HEK293 (cell line): ENCODE measurements at regions of chr9 and their contacts with region 1.

Region 1: DNA sequence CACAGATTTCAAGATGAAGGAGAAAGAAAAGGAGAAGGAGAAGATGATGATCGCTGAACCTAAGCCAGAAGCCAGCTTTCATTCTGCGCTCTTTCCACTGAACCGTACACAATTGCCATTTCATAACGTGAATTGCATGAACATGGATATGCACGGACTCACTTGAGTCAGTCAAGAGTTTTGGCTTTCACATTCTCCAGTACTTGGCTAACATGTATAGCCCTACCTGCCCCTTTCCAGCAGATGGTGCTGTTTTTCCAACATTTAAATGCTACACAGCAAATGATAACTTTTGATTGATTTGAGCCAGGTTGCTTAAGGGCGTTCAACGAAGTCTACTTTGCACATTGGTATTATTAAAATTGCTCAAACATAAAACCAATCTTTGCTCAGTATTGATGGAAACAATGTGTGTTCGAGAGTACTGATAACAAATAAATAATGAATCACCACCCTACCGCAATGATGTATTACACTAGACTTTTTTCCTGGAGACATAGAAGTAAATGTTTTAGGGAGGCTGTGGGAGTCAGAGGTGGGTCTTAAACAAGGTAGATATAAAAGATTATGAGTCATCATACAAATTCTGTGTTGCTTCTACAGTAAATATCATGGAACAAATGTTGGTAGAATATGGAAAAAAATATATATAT is 196.4 kb downstream of the TRPM3 start:
- H3K4me3 ChIP-seq: no peak overlapping the region
- H3K27ac ChIP-seq: no peak overlapping the region
- H3K4me1 ChIP-seq: no peaks in the 10 kb centered on the region
- CTCF ChIP-seq: peak; percentile 58

Region 2: DNA sequence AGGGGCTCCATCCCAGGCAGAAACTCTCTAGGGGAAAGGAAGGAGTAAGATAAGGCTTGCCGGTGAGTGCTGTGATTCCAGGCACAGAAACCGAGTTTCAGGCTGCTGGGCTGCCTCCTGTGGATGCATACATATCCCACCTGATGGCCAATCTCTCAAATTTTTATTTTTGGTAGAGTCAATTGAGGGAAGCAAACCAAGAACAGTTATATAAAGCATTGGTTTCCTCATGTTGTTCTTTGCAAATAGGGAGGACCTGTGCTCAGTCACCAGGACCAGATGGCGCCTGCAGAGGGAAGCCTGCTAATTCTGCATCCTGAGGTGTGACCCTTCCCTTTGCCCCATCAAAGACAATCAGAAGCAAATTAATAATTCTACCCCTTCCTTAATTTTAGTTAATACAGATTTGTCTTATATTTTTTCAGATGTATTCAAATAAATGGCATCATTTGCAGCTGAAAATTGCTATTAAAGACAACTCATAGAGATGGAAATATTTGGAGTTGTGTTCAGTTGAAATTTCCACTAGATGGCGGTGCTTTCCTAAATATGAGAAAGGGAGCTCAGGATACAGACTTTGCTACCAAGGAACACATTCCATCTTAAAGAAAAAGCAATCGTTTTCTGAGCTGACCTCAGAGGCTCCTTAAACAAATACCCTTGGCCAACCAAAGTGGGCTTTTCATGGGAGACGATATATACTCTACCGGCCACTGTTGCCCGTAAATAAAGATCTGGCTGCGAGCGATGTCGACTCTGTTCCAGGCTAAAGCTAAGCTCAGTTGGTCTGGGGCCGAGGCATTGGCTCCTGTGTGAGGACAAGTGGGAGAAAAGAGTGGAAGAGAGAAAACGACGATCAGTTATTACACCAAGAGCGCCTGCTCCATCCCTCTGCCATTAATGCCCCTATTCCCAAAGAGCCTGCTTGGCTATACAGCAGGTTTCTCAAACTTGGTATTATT is 284.9 kb before region 1 on chr9:
- CTCF ChIA-PET with region 1: interaction called, 14 read pairs
- POLR2A ChIA-PET with region 1: no interaction called
- H3K4me3 ChIP-seq: no peak overlapping the region
- H3K27ac ChIP-seq: no peak overlapping the region
- H3K4me1 ChIP-seq: no peaks in the 10 kb centered on the region
- CTCF ChIP-seq: peak; percentile 37; the same call in 1 of the 2 replicates

Region 3: DNA sequence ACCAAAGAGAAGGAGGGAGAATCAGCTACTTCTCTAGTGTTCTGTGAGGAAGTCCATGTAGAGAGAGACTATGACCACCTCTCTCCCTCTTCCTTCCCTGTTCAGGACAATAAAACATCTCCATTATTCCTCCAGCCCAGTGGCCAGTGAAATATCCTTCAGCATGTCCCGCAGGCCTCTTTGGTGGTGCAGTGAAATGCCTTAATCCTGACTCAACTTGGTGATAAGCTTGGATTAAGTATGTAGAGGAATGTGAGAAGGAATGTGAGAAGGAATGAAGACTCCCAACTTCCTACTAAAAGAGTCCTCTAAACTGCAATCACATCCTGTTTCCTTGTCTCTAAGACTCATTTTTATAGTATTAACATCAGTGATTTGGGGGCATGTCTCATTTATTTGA is 29.1 kb after region 1 on chr9:
- CTCF ChIA-PET with region 1: interaction called, 12 read pairs
- POLR2A ChIA-PET with region 1: no interaction called
- H3K4me3 ChIP-seq: no peak overlapping the region
- H3K27ac ChIP-seq: no peak overlapping the region
- H3K4me1 ChIP-seq: 0 out of 2 replicates have a peak, but pooled peaks cover 5% of the 10 kb centered on the region
- CTCF ChIP-seq: no peak

Region 4: DNA sequence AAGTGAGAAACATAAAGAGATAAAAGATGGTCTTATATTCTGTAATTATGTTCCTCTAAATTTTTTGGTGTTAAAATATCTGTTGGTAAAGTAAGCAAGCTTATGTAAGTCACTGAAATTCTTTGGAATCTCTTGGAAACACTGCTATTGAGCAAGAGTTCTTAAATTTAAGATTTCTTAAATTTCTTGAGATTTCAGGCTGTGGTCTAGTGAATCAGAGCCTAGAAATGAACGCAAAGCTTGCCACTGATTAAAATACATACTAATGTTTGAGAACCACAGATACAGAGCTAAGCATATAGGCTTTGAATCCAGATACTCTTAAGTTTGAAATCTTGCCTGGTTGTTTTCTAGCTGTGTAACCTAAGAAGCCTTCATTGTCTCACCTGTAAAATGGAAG is 63.0 kb after region 1 on chr9:
- CTCF ChIA-PET with region 1: interaction called, 10 read pairs
- POLR2A ChIA-PET with region 1: no interaction called
- H3K4me3 ChIP-seq: no peak overlapping the region
- H3K27ac ChIP-seq: no peak overlapping the region
- H3K4me1 ChIP-seq: peaks cover 4% of the 10 kb centered on the region; the same call in 1 of the 2 replicates
- CTCF ChIP-seq: no peak

Region 5: GRCh38 chr9:70995511-70995910 is 70.5 kb after region 1 on chr9:
- CTCF ChIA-PET with region 1: interaction called, 45 read pairs
- POLR2A ChIA-PET with region 1: no interaction called
- H3K4me3 ChIP-seq: no peak overlapping the region
- H3K27ac ChIP-seq: no peak overlapping the region
- H3K4me1 ChIP-seq: no peaks in the 10 kb centered on the region
- CTCF ChIP-seq: no peak

Region 6: DNA sequence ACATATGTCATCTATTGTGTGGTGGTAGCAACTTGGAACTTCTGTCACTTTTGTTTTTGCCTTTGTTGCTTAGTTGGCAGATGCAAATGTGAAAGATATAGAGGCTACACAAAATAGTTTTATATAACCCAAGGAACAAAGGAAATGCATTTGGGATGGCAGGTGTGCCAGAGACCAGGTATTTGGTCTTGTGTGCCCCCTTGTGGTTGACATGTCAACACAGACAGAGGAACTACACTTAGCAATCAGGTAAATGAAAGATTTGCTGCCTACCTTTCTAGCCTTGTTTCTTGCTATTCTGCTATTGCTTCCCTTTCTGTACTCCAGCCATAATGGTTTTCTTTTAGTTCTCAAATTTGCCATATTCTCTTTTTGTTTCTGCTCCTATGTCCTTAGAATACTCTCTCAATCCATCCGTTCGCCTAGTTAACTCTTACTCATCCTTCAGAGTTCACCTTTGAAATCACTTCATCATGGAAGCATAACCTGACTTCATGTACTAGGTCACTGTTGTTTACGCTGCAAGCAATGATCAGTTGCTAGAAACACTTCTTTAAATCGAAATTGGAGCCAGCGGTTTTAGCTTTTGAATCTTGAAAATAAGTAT is 76.9 kb after region 1 on chr9:
- CTCF ChIA-PET with region 1: interaction called, 45 read pairs
- POLR2A ChIA-PET with region 1: no interaction called
- H3K4me3 ChIP-seq: no peak overlapping the region
- H3K27ac ChIP-seq: no peak overlapping the region
- H3K4me1 ChIP-seq: no peaks in the 10 kb centered on the region
- CTCF ChIP-seq: 0 out of 2 replicates have a peak, but pooled peaks have one; percentile 31

Region 7: GRCh38 chr9:71052287-71052686 is 127.3 kb after region 1 on chr9:
- CTCF ChIA-PET with region 1: no interaction called
- POLR2A ChIA-PET with region 1: no interaction called
- H3K4me3 ChIP-seq: no peak overlapping the region
- H3K27ac ChIP-seq: no peak overlapping the region
- H3K4me1 ChIP-seq: no peaks in the 10 kb centered on the region
- CTCF ChIP-seq: no peak

Region 8: GRCh38 chr9:71249729-71250317 is 324.8 kb after region 1 on chr9:
- CTCF ChIA-PET with region 1: interaction called, 42 read pairs
- POLR2A ChIA-PET with region 1: no interaction called
- H3K4me3 ChIP-seq: no peak overlapping the region
- H3K27ac ChIP-seq: no peak overlapping the region
- H3K4me1 ChIP-seq: no peaks in the 10 kb centered on the region
- CTCF ChIP-seq: peak; percentile 71